Calu3 (cell line): ENCODE measurements at regions of chr14 and their contacts with region 1.

Region 1: GRCh38 chr14:28608851-28609828 is 157.4 kb upstream of the FOXG1 start:
- DNase-seq: peak; percentile 69
- H3K4me3 Mint-ChIP-seq: no peak overlapping the region
- H3K27ac Mint-ChIP-seq: no peak overlapping the region
- H3K4me1 Mint-ChIP-seq: peaks cover 12% of the 10 kb centered on the region
- H3K27me3 Mint-ChIP-seq: no peaks in the 10 kb centered on the region
- CTCF ChIP-seq: peak; percentile 55

Region 2: GRCh38 chr14:28157887-28158791 is 451.0 kb before region 1 on chr14:
- CTCF ChIA-PET with region 1: no interaction called
- intact Hi-C with region 1: loop called (anchors 10 kb)
- DNase-seq: no peak
- H3K4me3 Mint-ChIP-seq: no peak overlapping the region
- H3K27ac Mint-ChIP-seq: no peak overlapping the region
- H3K4me1 Mint-ChIP-seq: no peaks in the 10 kb centered on the region
- H3K27me3 Mint-ChIP-seq: no peaks in the 10 kb centered on the region
- CTCF ChIP-seq: no peak

Region 3: DNA sequence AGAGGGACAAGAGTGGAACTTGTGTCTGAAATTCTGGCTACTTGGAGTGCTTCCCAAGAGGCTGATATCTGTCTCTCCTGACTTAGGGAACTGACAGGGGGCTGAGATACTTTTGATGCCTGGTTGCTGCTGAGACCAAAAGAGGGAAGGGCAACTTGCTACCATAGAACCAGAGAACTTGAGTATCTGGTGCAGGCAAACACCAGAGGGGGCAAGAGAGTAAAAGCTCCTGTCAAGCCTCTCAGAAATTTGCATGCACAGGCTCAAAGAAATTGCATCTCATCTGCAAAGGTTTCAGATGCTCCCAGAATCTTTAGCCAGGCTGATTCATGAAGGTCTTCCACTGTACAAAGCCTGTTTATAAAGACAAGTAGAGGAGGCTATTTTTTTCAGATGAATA is 233.8 kb before region 1 on chr14:
- CTCF ChIA-PET with region 1: no interaction called
- intact Hi-C with region 1: loop called (anchors 1 kb)
- DNase-seq: peak; percentile 66
- H3K4me3 Mint-ChIP-seq: no peak overlapping the region
- H3K27ac Mint-ChIP-seq: no peak overlapping the region
- H3K4me1 Mint-ChIP-seq: peaks cover 9% of the 10 kb centered on the region
- H3K27me3 Mint-ChIP-seq: no peaks in the 10 kb centered on the region
- CTCF ChIP-seq: peak; percentile 54